K562 (cell line): ENCODE measurements at regions of chr5 and their contacts with region 1.

Region 1: DNA sequence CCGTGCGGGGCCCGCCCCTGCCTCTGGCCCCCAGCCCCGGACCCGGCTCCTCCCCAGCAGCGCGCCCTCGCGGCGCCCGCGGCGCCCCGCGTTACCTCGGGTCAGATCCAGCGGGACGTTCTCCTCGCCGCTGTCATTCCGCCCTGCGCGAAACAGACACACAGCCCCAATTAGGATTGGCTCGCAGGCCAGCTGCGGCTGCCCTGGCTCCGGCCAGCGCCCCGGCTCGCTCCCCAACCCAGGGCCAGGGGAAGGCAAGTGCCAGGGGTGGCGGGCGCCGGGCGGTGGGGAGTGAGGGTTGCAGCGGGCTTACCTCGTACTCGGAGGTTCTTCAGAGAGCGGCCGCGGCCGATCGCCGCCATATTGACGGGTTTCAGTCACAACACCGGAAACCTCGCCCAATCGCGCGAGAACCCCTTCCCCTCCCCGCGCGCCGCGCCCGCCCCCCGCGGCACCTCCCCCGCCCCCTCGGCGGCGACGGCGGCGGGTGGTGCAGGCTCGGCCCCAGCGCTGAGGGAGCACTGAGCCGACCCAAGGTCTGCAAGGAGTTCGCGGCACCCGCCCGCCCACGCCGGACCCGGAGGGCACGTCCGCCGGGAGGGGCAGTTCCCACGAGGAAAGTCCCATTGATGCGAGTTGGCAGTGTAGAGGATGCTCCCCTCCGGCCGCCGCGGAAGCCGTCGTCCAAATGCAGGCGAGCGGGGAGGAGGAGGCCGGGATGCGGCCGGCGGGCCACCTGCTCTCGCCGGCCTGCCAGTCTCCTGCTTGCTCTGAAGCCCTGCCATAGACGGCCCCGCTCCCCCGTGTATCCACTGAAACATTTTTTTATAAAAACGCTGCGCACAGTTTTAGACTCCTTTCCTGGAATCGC is at the start of gene RICTOR:
- DNase-seq: peak; percentile 95
- ATAC-seq: peak; percentile 85
- H3K4me3 ChIP-seq: peak within 1 kb of the TSS; percentile 90
- H3K27ac ChIP-seq: peak within 1 kb of the TSS; percentile 96
- H3K4me1 ChIP-seq: peaks cover 4 to 14% of the 10 kb centered on the region in 2 experiments; a peak in 3 of 5 replicates
- H3K27me3 ChIP-seq: no peaks in the 10 kb centered on the region
- CTCF ChIP-seq: no peak
- EP300 ChIP-seq: 0 out of 2 replicates have a peak, but pooled peaks have one; percentile 8
- POLR2A ChIP-seq: peak; percentile 92
- RAD21 ChIP-seq: no peak
- polyA plus RNA-seq, gene RICTOR: 13.9 to 15.9 TPM

Region 2: DNA sequence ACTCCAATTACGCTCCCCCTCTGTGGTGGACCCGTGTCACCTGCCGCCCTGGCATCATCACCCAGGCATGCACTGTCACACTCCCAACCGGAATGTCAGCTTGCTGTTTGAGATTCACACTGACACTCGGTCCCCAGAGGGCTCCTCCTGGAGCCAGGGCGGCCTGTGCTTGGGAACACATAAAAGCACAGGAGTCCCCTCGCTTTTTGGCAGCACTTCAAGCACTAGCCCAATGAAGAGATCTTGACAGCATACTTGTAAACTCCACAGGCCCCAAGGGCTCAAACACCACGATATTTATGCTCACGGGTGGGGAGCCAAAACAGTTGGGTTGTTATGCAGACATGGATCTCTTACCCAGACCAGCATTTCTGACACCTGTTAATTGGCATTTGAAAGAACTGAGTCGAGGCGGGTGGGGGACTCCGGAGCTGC is 906.7 kb before region 1 on chr5:
- CTCF ChIA-PET with region 1: no interaction called
- POLR2A ChIA-PET with region 1: no interaction called
- in situ Hi-C with region 1: no loop called
- intact Hi-C with region 1: no loop called
- DNase-seq: no peak
- ATAC-seq: no peak
- H3K4me3 ChIP-seq: no peak overlapping the region
- H3K27ac ChIP-seq: no peak overlapping the region
- H3K4me1 ChIP-seq: no peaks in the 10 kb centered on the region
- H3K27me3 ChIP-seq: peaks cover 13 to 25% of the 10 kb centered on the region in 2 experiments
- CTCF ChIP-seq: no peak
- EP300 ChIP-seq: no peak
- POLR2A ChIP-seq: no peak
- RAD21 ChIP-seq: no peak

Region 3: DNA sequence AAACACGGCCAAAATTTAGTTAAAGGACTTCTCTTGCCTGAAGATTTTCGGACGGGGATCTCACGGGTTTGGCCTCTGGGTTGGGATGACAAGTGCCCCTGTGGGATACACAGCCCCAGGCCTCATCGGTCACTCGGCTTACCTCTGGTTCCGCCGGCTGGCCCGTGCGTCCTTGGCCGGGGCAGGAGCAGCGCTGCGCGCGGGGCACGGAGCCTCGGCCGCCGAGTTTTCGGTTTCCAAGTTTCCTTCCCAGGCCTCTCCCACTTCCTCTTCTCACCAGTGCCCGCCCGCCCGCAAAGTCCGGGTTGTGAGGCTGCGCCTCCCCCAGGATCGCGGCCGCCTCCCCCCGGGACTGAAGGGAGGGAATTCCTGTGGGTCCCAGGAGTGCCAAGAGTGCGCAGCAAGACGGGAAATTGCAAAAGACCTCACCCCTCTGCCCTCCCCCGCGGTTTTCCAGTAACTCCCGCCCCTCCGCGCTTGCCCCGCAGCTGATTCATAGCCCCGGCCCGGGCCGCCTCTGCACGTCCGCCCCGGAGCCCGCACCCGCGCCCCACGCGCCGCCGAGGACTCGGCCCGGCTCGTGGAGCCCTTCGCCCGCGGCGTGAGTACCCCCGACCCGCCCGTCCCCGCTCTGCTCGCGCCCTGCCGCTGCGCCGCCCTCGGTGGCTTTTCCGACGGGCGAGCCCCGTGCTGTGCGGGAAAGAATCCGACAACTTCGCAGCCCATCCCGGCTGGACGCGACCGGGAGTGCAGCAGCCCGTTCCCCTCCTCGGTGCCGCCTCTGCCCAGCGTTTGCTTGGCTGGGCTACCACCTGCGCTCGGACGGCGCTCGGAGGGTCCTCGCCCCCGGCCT is 228.5 kb before region 1 on chr5 and contains the start of gene OSMR:
- CTCF ChIA-PET with region 1: no interaction called
- POLR2A ChIA-PET with region 1: no interaction called
- in situ Hi-C with region 1: no loop called
- intact Hi-C with region 1: loop called (anchors 10 kb)
- DNase-seq: peak; percentile 14 to 47 (median 31)
- ATAC-seq: peak; percentile 68
- H3K4me3 ChIP-seq: peak within 1 kb of the TSS; percentile 40
- H3K27ac ChIP-seq: no peak within 1 kb of the TSS; the same call in 2 of the 3 replicates
- H3K4me1 ChIP-seq: peaks cover 0 to 11% of the 10 kb centered on the region in 2 experiments; a peak in 2 of 5 replicates
- H3K27me3 ChIP-seq: peaks cover 18 to 22% of the 10 kb centered on the region in 2 experiments
- CTCF ChIP-seq: no peak
- EP300 ChIP-seq: no peak
- POLR2A ChIP-seq: no peak
- RAD21 ChIP-seq: no peak
- polyA plus RNA-seq, gene OSMR: 0.28 to 0.34 TPM

Region 4: DNA sequence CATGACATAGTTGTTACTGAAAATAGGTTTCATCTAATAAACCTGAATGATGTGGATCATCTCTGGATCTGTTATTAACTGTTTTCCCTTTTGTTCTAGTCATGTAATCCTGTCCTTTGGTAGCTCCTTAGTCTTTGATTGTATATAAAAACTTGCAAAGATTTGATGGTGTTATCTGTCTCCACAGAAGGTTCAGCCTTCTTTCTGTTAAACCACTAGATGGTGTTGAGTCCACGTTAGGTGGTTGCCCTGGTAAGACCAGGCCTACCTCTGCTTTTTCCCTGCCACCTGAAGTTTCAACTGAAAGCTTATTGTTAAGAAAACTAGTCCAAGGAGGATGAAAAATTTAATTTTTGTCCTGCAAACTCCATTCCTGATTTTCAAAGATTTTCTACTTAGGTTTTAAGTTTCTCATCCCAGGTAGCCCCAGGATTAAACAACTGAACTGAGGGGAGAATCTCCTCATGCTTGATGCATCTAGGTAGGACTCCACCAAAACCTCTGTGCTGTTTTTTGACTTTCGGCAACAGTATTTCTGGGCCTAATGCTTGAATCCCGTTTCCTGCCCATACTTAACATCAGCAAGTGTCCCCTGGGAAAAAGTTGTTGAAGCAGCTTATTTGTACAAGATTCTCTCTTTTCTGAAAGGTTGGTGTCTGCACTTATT is 68.6 kb before region 1 on chr5:
- CTCF ChIA-PET with region 1: no interaction called
- POLR2A ChIA-PET with region 1: no interaction called
- in situ Hi-C with region 1: no loop called
- intact Hi-C with region 1: loop called (anchors 2 kb)
- DNase-seq: peak in 2 of 4 experiments; percentile 44 to 66
- ATAC-seq: peak; percentile 92
- H3K4me3 ChIP-seq: no peak overlapping the region
- H3K27ac ChIP-seq: peak overlapping the region; percentile 27; the same call in 1 of the 3 replicates
- H3K4me1 ChIP-seq: peaks cover 0 to 7% of the 10 kb centered on the region in 2 experiments; a peak in 2 of 5 replicates
- H3K27me3 ChIP-seq: no peaks in the 10 kb centered on the region
- CTCF ChIP-seq: peak; percentile 51 to 71 (median 70)
- EP300 ChIP-seq: no peak
- POLR2A ChIP-seq: no peak
- RAD21 ChIP-seq: peak; percentile 67 to 85

Region 5: GRCh38 chr5:39063037-39063436 is 11.2 kb before region 1 on chr5:
- CTCF ChIA-PET with region 1: no interaction called
- POLR2A ChIA-PET with region 1: interaction called, 26 read pairs
- in situ Hi-C with region 1: no loop called
- intact Hi-C with region 1: no loop called
- DNase-seq: no peak
- ATAC-seq: peak; percentile 57
- H3K4me3 ChIP-seq: no peak overlapping the region
- H3K27ac ChIP-seq: peak overlapping the region; percentile 20; the same call in 1 of the 3 replicates
- H3K4me1 ChIP-seq: no peaks in the 10 kb centered on the region
- H3K27me3 ChIP-seq: no peaks in the 10 kb centered on the region
- CTCF ChIP-seq: no peak
- EP300 ChIP-seq: no peak
- POLR2A ChIP-seq: no peak
- RAD21 ChIP-seq: no peak

Region 6: GRCh38 chr5:39117401-39117800 is 43.1 kb after region 1 on chr5:
- CTCF ChIA-PET with region 1: no interaction called
- POLR2A ChIA-PET with region 1: no interaction called
- in situ Hi-C with region 1: no loop called
- intact Hi-C with region 1: loop called (anchors 5 kb)
- DNase-seq: peak in 2 of 4 experiments; percentile 67 to 86
- ATAC-seq: peak; percentile 31
- H3K4me3 ChIP-seq: no peak overlapping the region
- H3K27ac ChIP-seq: peak overlapping the region; percentile 55
- H3K4me1 ChIP-seq: peaks cover 10 to 60% of the 10 kb centered on the region in 2 experiments
- H3K27me3 ChIP-seq: no peaks in the 10 kb centered on the region
- CTCF ChIP-seq: no peak
- EP300 ChIP-seq: peak; percentile 92
- POLR2A ChIP-seq: no peak
- RAD21 ChIP-seq: no peak

Region 7: GRCh38 chr5:39202597-39203274 is 128.5 kb after region 1 on chr5:
- CTCF ChIA-PET with region 1: no interaction called
- POLR2A ChIA-PET with region 1: no interaction called
- in situ Hi-C with region 1: no loop called
- intact Hi-C with region 1: loop called (anchors 5 kb)
- DNase-seq: peak in 2 of 4 experiments; percentile 40 to 46
- ATAC-seq: peak; percentile 30
- H3K4me3 ChIP-seq: peak overlapping the region; percentile 22; the same call in 1 of the 2 replicates
- H3K27ac ChIP-seq: peak overlapping the region; percentile 61; the same call in 2 of the 3 replicates
- H3K4me1 ChIP-seq: peaks cover 7 to 26% of the 10 kb centered on the region in 2 experiments; a peak in 4 of 5 replicates
- H3K27me3 ChIP-seq: no peaks in the 10 kb centered on the region
- CTCF ChIP-seq: no peak
- EP300 ChIP-seq: peak; percentile 17; the same call in 1 of the 2 replicates
- POLR2A ChIP-seq: no peak
- RAD21 ChIP-seq: no peak